ENCODE measurements at regions of chr17 and their contacts with region 1.

Region 1: GRCh38 chr17:76147211-76148014 is 6.4 kb upstream of the FOXJ1 start:
- DNase-seq: no peak
- H3K4me3 Mint-ChIP-seq: no peak overlapping the region
- H3K27ac Mint-ChIP-seq: peak overlapping the region; percentile 56
- H3K4me1 Mint-ChIP-seq: peaks cover 68% of the 10 kb centered on the region
- H3K27me3 Mint-ChIP-seq: no peaks in the 10 kb centered on the region

Region 2: GRCh38 chr17:76246080-76247066 is 99.0 kb after region 1 on chr17:
- CTCF ChIA-PET with region 1: interaction called, 4 read pairs
- POLR2A ChIA-PET with region 1: interaction called, 16 read pairs
- DNase-seq: peak; percentile 87
- H3K4me3 Mint-ChIP-seq: peak overlapping the region; percentile 32
- H3K27ac Mint-ChIP-seq: peak overlapping the region; percentile 94
- H3K4me1 Mint-ChIP-seq: peaks cover 82% of the 10 kb centered on the region
- H3K27me3 Mint-ChIP-seq: peaks cover 5% of the 10 kb centered on the region

Measured in activated CD4-positive, alpha-beta memory T cell treated with anti-CD3 and anti-CD28 coated beads, Interleukin-2, amount 10 ng/mL, durations not matched to agents 7 days and 5 days (primary cell).